ENCODE measurements at regions of chr18 and their contacts with region 1.

Region 1: DNA sequence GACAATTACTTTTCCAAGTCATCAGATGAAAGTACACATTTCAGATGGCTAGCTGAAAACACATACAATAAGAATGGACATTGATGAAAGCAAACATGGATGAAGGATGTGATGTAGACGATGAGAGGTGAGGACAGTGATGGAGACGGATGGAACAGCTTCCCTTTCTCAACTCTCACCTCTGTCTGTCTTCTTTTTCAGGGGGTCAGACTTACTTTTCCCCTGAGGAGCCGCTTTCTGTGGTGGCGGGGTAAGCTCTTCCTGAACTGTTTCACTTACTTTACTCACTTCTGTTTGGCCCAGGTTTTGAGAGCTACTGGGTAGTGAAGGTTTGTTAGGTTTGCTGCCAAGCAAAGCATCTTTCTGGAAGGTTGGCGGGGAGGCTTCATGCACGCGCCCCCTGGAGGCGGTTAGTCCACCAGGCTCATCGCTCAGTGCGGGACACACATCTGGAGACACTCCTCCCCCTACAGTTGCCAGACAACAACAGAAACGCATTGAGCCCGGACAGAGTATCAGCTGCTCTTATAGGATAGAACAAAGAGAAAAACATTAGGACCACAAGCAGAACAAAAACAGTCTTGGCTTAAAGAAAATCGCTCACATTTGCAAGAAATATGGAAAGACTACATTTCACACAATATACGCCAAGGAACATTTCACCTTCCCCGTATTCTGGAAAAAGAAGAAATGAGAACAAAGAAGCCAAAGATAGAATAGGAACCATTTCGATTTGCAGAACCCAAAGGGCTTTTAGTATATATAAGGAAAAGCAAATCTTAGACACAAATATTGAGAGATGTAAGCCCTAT is 90.5 kb downstream of the MYOM1 start:
- DNase-seq: peak; percentile 85 to 87
- H3K4me3 ChIP-seq: no peak overlapping the region
- H3K4me3 Mint-ChIP-seq: no peak overlapping the region
- H3K27ac Mint-ChIP-seq: no peak overlapping the region
- H3K4me1 ChIP-seq: no peaks in the 10 kb centered on the region
- H3K4me1 Mint-ChIP-seq: peaks cover 7% of the 10 kb centered on the region
- H3K27me3 ChIP-seq: no peaks in the 10 kb centered on the region
- H3K27me3 Mint-ChIP-seq: no peaks in the 10 kb centered on the region
- CTCF ChIP-seq: peak; percentile 85 to 98

Region 2: DNA sequence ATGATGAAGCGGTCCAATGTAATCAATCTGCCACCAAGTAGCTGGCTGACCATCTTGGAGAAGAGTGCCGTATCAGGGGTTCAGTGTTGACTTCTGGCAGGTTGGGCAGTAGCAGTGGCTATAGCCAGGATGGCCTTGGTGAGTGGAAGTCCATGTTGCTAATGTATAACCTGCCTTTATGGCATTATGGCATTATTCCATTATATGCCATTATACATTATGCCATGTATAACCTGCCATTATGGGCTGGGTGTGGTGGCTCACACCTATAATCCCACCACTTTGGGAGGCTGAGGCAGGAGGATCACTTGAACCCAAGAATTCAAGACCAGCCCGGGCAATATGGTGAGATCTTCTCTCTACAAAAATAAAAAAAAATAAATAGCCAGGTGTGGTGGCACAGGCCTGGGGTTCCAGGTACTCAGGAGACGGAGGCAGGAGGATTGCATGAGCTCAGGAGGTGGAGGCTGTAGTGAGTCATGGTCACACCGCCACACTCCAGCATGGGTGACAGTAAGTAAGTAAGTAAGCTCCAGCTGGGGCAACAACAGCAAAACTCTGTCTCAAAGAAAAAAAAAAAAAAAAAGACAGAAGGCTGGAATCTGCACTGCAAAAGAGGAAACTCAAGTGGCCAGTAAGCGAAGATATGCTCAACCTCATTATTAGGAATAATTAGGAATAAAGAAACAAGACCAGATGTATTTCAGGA is 306.9 kb before region 1 on chr18:
- CTCF ChIA-PET with region 1: no interaction called
- POLR2A ChIA-PET with region 1: no interaction called
- intact Hi-C with region 1: no loop called
- DNase-seq: no peak
- H3K4me3 ChIP-seq: no peak overlapping the region
- H3K4me3 Mint-ChIP-seq: no peak overlapping the region
- H3K27ac Mint-ChIP-seq: no peak overlapping the region
- H3K4me1 ChIP-seq: peaks cover 20% of the 10 kb centered on the region
- H3K4me1 Mint-ChIP-seq: peaks cover 20% of the 10 kb centered on the region
- H3K27me3 ChIP-seq: no peaks in the 10 kb centered on the region
- H3K27me3 Mint-ChIP-seq: no peaks in the 10 kb centered on the region
- CTCF ChIP-seq: no peak

Region 3: GRCh38 chr18:2932247-2933181 is 196.7 kb before region 1 on chr18:
- CTCF ChIA-PET with region 1: no interaction called
- POLR2A ChIA-PET with region 1: no interaction called
- intact Hi-C with region 1: loop called (anchors 1 kb)
- DNase-seq: peak in 1 of 2 experiments; percentile 68
- H3K4me3 ChIP-seq: no peak overlapping the region
- H3K4me3 Mint-ChIP-seq: no peak overlapping the region
- H3K27ac Mint-ChIP-seq: no peak overlapping the region
- H3K4me1 ChIP-seq: no peaks in the 10 kb centered on the region
- H3K4me1 Mint-ChIP-seq: peaks cover 6% of the 10 kb centered on the region
- H3K27me3 ChIP-seq: no peaks in the 10 kb centered on the region
- H3K27me3 Mint-ChIP-seq: no peaks in the 10 kb centered on the region
- CTCF ChIP-seq: peak; percentile 73 to 75

Region 4: DNA sequence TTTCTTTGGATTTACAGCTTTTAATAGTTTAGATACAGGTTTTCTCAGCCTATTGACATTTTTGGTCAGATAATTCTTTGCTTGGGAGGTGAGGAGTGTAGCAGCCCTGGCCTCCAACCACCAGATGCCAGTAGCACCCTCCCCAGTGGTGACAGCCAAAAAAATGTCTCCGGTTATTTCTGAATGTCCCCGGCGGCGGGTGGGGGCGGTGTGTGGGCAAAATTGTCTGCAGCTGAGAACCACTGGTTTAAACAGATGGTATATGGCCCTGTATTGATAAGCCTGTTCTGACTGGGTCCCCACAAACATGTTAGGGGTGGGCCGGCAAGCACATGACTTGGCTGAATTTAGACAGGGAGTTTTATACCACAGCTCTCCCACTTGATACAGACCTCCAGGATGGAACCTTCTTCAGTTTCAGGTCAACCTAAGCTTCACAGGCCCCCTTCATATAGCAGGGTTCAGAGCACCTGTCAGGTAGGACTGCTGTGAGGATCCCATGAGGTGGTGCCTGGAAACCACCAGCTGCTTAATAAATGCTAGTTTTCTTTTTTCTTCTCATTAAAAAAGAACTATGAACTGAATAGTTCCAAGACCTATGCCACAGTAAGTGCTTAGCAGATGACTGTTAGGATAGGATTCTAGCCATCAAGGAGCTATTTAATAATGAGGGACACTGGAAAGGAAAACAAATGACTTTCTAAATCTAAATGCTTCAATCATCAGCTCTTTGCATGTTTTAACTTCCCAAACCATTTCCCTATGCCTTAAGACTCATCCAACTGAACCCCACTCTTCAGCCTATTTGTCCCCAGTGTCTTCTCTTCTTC is 134.4 kb before region 1 on chr18:
- CTCF ChIA-PET with region 1: interaction called, 11 read pairs
- POLR2A ChIA-PET with region 1: no interaction called
- intact Hi-C with region 1: loop called (anchors 1 kb)
- DNase-seq: peak; percentile 47 to 61
- H3K4me3 ChIP-seq: no peak overlapping the region
- H3K4me3 Mint-ChIP-seq: no peak overlapping the region
- H3K27ac Mint-ChIP-seq: peak overlapping the region; percentile 47
- H3K4me1 ChIP-seq: peaks cover 14% of the 10 kb centered on the region
- H3K4me1 Mint-ChIP-seq: peaks cover 17% of the 10 kb centered on the region
- H3K27me3 ChIP-seq: no peaks in the 10 kb centered on the region
- H3K27me3 Mint-ChIP-seq: no peaks in the 10 kb centered on the region
- CTCF ChIP-seq: peak; percentile 52 to 65

Region 5: GRCh38 chr18:3012964-3013804 is 116.1 kb before region 1 on chr18 and contains the start of gene LPIN2:
- CTCF ChIA-PET with region 1: interaction called, 3 read pairs
- POLR2A ChIA-PET with region 1: no interaction called
- intact Hi-C with region 1: loop called (anchors 5 kb)
- DNase-seq: peak; percentile 96 to 98
- H3K4me3 ChIP-seq: peak within 1 kb of the TSS; percentile 83
- H3K4me3 Mint-ChIP-seq: peak within 1 kb of the TSS; percentile 87
- H3K27ac Mint-ChIP-seq: peak within 1 kb of the TSS; percentile 87
- H3K4me1 ChIP-seq: peaks cover 18% of the 10 kb centered on the region
- H3K4me1 Mint-ChIP-seq: peaks cover 15% of the 10 kb centered on the region
- H3K27me3 ChIP-seq: no peaks in the 10 kb centered on the region
- H3K27me3 Mint-ChIP-seq: no peaks in the 10 kb centered on the region
- CTCF ChIP-seq: no peak
- total RNA-seq, gene LPIN2: 25.3 and 26.2 TPM in 2 replicates

Region 6: DNA sequence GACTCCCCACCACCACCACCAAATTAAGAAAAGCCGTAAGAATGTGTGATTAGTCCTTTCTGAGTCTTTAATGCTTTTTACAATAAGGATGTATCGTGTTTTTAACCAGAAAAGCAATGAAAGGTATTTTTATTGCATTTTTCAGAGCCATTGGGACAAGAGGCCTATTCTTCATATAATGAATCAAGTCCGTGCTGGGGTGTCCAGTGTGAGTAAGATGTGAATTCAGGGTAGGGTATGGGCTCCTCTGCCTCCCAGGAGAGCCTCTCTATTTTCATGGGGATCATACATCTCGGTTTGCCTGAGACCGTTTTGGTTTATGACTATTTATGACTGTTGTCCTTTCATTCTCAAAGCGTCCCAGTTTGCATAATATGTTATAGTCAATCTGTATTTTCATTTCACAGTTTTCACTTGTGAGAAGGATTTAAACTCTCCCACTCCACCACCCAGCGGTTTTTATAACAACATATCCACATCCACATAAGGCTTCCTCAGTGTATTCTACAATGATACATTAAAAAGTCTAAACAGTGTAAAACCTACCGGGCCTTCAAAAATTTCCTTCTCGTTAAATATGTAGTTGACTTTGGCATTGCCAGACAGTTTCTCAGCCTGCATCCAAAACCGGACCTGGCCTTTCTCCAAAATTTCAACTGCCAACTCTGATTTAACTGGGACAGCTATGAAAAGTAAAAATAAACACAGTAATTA is 35.5 kb before region 1 on chr18:
- CTCF ChIA-PET with region 1: no interaction called
- POLR2A ChIA-PET with region 1: no interaction called
- intact Hi-C with region 1: loop called (anchors 1 kb)
- DNase-seq: no peak
- H3K4me3 ChIP-seq: no peak overlapping the region
- H3K4me3 Mint-ChIP-seq: no peak overlapping the region
- H3K27ac Mint-ChIP-seq: no peak overlapping the region
- H3K4me1 ChIP-seq: no peaks in the 10 kb centered on the region
- H3K4me1 Mint-ChIP-seq: no peaks in the 10 kb centered on the region
- H3K27me3 ChIP-seq: no peaks in the 10 kb centered on the region
- H3K27me3 Mint-ChIP-seq: no peaks in the 10 kb centered on the region
- CTCF ChIP-seq: no peak

Region 7: DNA sequence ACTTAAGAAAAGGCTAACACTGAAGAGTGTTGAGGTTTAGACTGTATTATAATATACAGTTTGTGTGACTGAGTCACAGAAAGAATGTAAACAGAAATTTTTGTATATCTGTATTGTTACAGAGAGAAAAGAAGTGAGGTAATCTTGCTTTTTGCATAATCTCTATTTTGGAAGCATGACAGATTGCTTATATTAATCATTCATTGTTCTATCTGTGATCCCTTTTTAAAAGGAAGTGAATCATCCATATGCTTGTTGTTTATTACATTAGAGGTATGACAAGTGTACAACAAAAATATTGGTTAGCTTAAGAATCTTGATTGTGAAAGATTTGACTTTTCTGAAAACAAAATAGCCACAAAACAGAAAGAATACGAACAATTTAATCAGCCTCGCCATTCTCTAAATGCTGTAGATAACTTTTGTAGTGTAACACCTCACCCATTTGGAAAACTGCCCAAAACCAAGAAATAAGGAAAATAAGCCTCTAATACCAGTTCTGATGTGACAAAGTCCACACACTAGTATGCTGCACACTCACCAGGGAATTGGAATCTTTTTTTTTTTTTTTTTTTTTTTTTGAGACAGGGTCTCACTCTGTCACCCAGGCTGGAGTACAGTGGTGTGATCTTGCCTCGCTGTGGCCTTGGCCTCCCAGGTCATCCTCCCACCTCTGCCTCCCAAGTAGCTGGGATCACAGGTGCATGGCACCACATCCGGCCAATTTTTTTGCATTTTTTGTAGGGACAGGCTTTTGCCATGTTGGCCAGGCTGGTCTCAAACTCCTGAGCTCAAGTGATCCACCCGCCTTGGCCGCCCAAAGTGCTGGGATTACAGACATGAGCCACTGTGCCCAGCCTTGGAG is 24.8 kb before region 1 on chr18:
- CTCF ChIA-PET with region 1: no interaction called
- POLR2A ChIA-PET with region 1: no interaction called
- intact Hi-C with region 1: loop called (anchors 1 kb)
- DNase-seq: no peak
- H3K4me3 ChIP-seq: no peak overlapping the region
- H3K4me3 Mint-ChIP-seq: no peak overlapping the region
- H3K27ac Mint-ChIP-seq: peak overlapping the region; percentile 45
- H3K4me1 ChIP-seq: peaks cover 39% of the 10 kb centered on the region
- H3K4me1 Mint-ChIP-seq: peaks cover 28% of the 10 kb centered on the region
- H3K27me3 ChIP-seq: no peaks in the 10 kb centered on the region
- H3K27me3 Mint-ChIP-seq: no peaks in the 10 kb centered on the region
- CTCF ChIP-seq: no peak

Region 8: GRCh38 chr18:3230401-3231334 is 101.4 kb after region 1 on chr18:
- CTCF ChIA-PET with region 1: no interaction called
- POLR2A ChIA-PET with region 1: no interaction called
- intact Hi-C with region 1: no loop called
- DNase-seq: peak; percentile 41 to 62
- H3K4me3 ChIP-seq: no peak overlapping the region
- H3K4me3 Mint-ChIP-seq: no peak overlapping the region
- H3K27ac Mint-ChIP-seq: no peak overlapping the region
- H3K4me1 ChIP-seq: peaks cover 16% of the 10 kb centered on the region
- H3K4me1 Mint-ChIP-seq: peaks cover 11% of the 10 kb centered on the region
- H3K27me3 ChIP-seq: no peaks in the 10 kb centered on the region
- H3K27me3 Mint-ChIP-seq: no peaks in the 10 kb centered on the region
- CTCF ChIP-seq: no peak

Region 9: DNA sequence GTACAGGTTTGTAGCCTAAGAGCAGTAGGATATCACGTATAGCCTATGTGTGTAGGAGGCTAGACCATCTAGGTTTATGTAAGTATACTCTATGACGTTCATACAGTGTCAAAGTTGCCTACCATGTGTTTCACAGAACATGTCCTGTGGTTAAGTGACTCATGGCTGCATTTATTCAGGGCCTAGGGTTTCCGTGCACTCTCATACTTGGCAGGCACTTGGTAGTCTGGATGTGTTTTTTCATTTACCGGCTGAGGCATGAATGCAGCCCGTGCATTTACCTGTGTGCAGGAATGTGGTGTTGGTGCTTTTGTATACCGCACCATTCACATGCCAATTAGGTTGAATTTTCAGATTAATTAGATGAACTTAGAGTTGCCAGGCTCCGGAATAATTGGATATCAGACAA is 176.1 kb after region 1 on chr18:
- CTCF ChIA-PET with region 1: no interaction called
- POLR2A ChIA-PET with region 1: no interaction called
- intact Hi-C with region 1: no loop called
- DNase-seq: no peak
- H3K4me3 ChIP-seq: no peak overlapping the region
- H3K4me3 Mint-ChIP-seq: no peak overlapping the region
- H3K27ac Mint-ChIP-seq: no peak overlapping the region
- H3K4me1 ChIP-seq: no peaks in the 10 kb centered on the region
- H3K4me1 Mint-ChIP-seq: peaks cover 6% of the 10 kb centered on the region
- H3K27me3 ChIP-seq: no peaks in the 10 kb centered on the region
- H3K27me3 Mint-ChIP-seq: no peaks in the 10 kb centered on the region
- CTCF ChIP-seq: no peak

Region 10: GRCh38 chr18:4639628-4640310 is 1510.5 kb after region 1 on chr18:
- CTCF ChIA-PET with region 1: no interaction called
- POLR2A ChIA-PET with region 1: no interaction called
- intact Hi-C with region 1: no loop called
- DNase-seq: no peak
- H3K4me3 ChIP-seq: no peak overlapping the region
- H3K4me3 Mint-ChIP-seq: no peak overlapping the region
- H3K27ac Mint-ChIP-seq: no peak overlapping the region
- H3K4me1 ChIP-seq: no peaks in the 10 kb centered on the region
- H3K4me1 Mint-ChIP-seq: no peaks in the 10 kb centered on the region
- H3K27me3 ChIP-seq: no peaks in the 10 kb centered on the region
- H3K27me3 Mint-ChIP-seq: peaks cover 2% of the 10 kb centered on the region
- CTCF ChIP-seq: no peak

Measured in Caco-2 (cell line).